Right cardiac atrium (tissue), 5 donors: ENCODE measurements at regions of chr5 and their contacts with region 1.

Region 1: GRCh38 chr5:71782771-71783770 is 64.0 kb downstream of the CARTPT start:
- DNase-seq: peak; percentile 83 to 92 (median 85)
- ATAC-seq: peak; percentile 89 to 90
- H3K4me3 ChIP-seq: peak overlapping the region; percentile 35
- H3K27ac ChIP-seq: peak overlapping the region; percentile 36
- H3K4me1 ChIP-seq: no peaks in the 10 kb centered on the region
- H3K27me3 ChIP-seq: no peaks in the 10 kb centered on the region

Region 2: GRCh38 chr5:72018146-72018803 is 235.2 kb after region 1 on chr5:
- intact Hi-C with region 1: loop called in 2 of 4 experiments (anchors 10 kb)
- DNase-seq: peak in 2 of 3 donors; percentile 30 to 55
- ATAC-seq: peak in 1 of 2 donors; percentile 11
- H3K4me3 ChIP-seq: no peak overlapping the region
- H3K27ac ChIP-seq: no peak overlapping the region
- H3K4me1 ChIP-seq: peaks cover 5% of the 10 kb centered on the region
- H3K27me3 ChIP-seq: no peaks in the 10 kb centered on the region

Region 3: GRCh38 chr5:72108202-72109061 is 325.4 kb after region 1 on chr5:
- intact Hi-C with region 1: loop called in 3 of 4 experiments (anchors 5 to 10 kb)
- DNase-seq: peak; percentile 83 to 94 (median 94)
- ATAC-seq: peak; percentile 79 to 82
- H3K4me3 ChIP-seq: peak overlapping the region; percentile 61
- H3K27ac ChIP-seq: peak overlapping the region; percentile 69
- H3K4me1 ChIP-seq: peaks cover 3% of the 10 kb centered on the region
- H3K27me3 ChIP-seq: no peaks in the 10 kb centered on the region

Region 4: DNA sequence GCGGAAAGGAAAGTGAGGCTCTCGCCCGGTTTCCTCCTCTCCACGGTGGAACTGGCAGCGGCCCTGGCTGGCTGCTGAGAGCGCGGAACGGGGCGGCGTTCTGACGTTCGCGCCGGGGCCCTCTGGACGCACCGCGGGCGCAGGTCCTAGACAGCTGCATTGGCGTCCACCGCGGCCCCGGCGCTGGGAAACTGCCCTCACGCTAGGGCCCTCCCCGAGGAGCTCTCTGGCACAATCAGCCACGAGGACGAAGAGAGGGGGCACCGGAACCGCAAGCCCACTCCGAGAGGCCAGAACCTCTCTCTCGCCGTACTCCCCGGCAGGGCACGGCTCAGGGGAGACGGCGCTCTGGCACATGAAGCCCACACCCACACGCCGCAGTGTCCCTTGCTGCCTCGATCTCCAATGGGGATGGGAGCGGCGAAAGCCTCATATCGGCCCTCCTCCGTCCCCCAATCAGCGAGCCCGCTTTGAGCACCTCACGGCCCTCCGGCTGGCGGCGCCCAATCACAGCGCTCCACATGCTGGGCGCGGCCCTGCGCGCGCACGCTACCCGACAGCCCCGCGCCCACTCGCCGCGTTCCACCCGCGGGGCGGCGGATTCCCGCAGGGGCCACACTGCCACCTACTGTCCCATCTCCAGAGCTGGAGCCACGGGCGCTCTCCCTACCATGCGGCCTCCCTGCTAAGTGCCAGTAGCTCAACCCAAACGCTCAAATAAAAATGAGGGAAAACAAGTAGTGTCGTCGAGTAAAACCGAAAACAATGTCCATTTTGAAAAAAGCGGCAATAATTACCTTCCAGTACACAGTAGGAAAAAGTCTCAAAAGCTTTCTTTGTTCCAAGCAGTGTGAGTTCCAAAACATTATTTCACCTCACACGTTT is 525.1 kb after region 1 on chr5:
- intact Hi-C with region 1: loop called (anchors 5 to 10 kb)
- DNase-seq: peak; percentile 99
- ATAC-seq: peak; percentile 99
- H3K4me3 ChIP-seq: peak overlapping the region; percentile 45
- H3K27ac ChIP-seq: peak overlapping the region; percentile 82
- H3K4me1 ChIP-seq: no peaks in the 10 kb centered on the region
- H3K27me3 ChIP-seq: no peaks in the 10 kb centered on the region